ENCODE measurements at regions of chr2 and their contacts with region 1.

Region 1: DNA sequence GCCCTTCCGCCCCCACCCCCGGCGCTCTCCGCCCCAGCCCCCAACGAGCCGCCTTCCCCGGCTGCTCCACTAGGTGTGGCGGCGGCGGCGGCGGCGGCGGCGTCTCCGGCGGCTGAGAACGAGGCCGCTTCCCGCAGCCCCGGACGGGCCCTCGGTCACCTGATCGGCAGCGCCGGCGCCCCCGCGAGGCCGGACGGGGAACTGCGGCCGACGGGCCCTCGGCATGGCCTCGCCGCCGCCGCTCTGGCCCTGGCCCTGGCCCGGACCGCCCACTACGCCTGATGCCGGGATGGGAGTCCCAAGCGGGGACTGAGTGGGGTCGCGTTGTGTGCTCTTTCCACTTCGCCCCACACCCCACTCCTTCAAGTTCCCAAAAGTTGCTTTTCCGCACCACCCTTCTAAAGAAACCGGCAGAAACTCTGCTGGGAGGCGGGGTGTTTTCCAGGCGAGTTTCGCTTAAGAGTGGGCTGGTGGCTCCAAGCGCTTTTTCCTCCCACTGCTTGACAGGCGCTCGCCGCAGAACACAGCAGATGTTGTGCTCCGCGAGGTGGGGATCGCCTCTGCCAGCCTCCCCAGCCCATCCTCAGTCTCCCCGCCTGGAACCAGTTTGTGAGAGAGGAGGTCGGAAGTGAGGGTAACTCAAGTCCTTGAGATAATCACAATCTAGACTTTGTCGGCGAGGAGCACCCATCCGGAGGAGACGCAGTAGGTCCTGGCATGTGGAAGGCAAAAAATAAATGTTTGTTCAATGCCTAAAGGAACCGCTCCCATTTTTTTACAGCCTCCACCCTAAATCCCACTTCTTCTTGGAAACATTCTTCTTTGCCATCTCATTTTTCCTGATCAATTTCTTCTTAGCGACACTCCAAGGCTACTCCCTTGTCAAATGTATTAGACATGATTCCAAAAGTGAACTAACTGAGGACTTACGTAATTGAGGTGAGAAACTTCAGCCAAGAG is at the start of gene NCKAP1:
- DNase-seq: peak; percentile 94
- total RNA-seq, gene NCKAP1: 153 TPM

Region 2: DNA sequence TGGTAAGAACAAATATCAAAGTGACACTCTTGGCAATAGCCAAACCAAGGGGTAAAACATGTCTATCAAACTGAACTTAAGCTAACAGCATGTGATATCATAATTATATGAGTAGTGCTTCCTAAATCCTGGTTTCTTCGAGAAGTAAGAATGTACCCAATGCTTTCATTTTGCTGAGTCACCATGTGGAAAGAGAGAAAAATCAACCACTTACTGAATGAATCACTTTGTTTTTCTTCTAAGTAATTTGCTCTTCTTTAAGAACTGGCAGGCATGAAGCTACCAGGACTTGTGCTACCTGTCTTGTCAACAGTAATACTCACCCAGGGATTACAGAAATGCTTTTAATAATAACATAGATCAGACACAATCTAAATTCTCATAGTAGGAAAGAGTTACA is 20.9 kb after region 1 on chr2:
- intact Hi-C with region 1: no loop called
- DNase-seq: no peak

Region 3: GRCh38 chr2:183078465-183079138 is 40.0 kb after region 1 on chr2 and contains the start of gene DUSP19:
- intact Hi-C with region 1: loop called (anchors 1 kb)
- DNase-seq: peak; percentile 90
- total RNA-seq, gene DUSP19: 8.6 TPM